Head of caudate nucleus (tissue), 42 donors: ENCODE measurements at regions of chr22 and their contacts with region 1.

Region 1: DNA sequence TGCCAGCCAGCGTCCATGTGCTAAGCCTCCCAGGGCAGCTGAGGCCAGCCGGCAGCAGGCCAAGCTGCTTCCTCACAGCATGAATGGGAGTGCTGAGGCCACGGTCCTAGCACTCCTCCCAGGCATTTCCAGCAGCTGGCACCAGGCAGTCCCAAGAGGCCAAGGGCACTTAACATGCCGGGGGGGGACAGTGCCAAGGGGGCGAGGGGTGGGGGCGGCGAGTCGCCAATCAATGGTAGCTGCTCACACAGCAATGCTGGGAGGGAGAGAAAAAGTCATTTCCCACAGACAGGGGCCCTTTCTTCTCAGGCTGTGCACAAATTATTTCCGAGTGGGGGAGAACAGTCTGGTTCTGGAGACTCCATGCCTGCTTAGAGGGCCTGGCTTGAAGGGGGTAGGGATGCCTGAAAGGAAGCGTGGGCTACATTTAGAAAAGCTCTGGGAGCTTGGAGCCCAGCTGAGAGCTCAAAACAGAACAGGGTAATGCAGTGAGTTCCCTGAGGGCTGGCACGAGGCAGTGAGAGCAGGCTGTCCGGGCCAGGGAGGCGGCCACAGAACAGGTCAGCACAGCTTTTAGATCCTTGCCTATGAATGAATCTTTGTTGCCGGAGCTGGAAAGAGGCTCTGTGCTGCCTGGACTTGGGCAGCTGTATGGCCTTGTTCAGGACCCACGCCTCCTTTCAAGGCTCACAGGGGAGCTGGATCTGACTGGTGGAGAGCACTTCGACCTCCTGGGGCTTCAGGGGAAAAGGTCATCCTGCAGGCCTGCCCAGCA is 14.4 kb upstream of the TBC1D10A start:
- DNase-seq: peak; percentile 53 to 90 (median 79)

Region 2: GRCh38 chr22:30287648-30288418 is 53.3 kb before region 1 on chr22:
- intact Hi-C with region 1: loop called (anchors 5 kb)
- DNase-seq: peak; percentile 63 to 94 (median 82)